Calu3 (cell line): ENCODE measurements at regions of chr3 and their contacts with region 1.

Region 1: DNA sequence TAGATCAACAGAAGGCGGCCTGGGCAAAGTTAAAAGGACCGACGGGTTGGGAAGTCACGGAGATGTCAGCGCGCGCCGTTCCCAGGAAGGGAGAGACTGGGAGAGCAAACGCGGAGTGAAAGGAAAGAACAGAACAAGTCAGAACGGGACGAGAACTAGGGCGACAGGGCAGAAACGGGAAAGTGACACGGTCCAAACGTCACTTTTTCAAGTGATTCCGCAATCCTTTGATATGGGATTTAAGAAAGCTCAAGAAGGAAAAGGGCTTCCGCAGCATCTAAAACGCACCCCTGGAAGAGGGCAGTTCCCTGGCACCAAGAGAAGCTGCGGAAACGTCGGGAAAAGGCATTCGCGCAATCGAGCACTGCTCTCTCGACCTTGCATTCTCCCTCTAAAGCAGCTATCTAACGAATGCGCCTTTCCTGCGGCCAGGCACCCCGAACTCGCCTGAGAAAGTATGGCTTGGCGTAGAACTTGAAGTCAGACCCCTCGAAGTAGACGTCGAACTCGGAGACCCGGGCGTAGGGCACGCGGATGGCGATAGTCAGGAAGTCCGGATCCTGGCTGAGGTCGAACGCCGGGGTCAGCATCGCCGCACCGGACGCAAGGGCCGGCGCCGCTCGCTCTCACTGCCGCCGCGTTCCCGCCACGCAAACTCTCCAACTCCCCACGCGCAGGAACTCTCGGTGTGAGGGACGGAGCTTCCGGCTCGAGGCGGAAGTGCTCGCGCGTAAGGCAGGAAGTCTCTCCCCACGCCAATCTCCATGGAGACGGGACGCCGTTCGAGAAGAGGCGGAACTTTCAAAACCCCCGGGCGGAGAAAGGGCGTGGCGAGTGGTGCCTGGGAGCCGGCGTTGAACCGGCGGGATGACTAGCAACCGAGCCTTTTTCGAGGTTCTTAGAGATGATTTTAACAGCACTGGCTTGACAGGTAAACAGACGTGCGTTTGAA is at the start of gene SHQ1:
- DNase-seq: peak; percentile 93
- H3K4me3 Mint-ChIP-seq: peak within 1 kb of the TSS; percentile 90
- H3K27ac Mint-ChIP-seq: peak within 1 kb of the TSS; percentile 75
- H3K4me1 Mint-ChIP-seq: peaks cover 24% of the 10 kb centered on the region
- H3K27me3 Mint-ChIP-seq: no peaks in the 10 kb centered on the region
- CTCF ChIP-seq: no peak
- total RNA-seq, gene SHQ1: 19.4 and 22.3 TPM in 2 replicates

Region 2: GRCh38 chr3:72996473-72997333 is 148.7 kb after region 1 on chr3 and contains the start of gene PPP4R2:
- CTCF ChIA-PET with region 1: interaction called, 3 read pairs
- intact Hi-C with region 1: loop called (anchors 5 kb)
- DNase-seq: peak; percentile 91
- H3K4me3 Mint-ChIP-seq: peak within 1 kb of the TSS; percentile 96
- H3K27ac Mint-ChIP-seq: peak within 1 kb of the TSS; percentile 89
- H3K4me1 Mint-ChIP-seq: peaks cover 10% of the 10 kb centered on the region
- H3K27me3 Mint-ChIP-seq: no peaks in the 10 kb centered on the region
- CTCF ChIP-seq: no peak
- total RNA-seq, gene PPP4R2: 68.4 and 89.0 TPM in 2 replicates

Region 3: DNA sequence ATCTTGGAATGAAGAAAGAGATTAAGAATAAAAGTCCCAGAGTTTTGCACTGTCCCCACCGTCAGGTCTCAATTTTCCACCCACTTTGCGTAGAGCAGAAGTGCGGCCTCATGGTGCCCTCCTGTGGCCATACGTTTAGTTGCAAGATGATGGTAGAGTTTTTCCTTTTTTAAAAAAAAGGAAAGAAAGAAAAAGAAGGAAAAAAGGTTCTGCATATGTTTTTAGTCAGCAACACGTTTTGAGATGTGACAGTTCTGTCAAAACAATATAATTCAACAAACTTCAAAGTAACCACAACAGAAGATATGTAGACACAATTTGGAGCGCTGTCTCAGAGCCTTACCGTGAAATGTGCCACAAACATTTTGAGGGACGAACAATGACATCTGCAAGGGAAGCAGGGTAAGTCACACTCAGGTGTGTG is 238.1 kb after region 1 on chr3:
- CTCF ChIA-PET with region 1: interaction called, 12 read pairs
- intact Hi-C with region 1: loop called (anchors 1 kb)
- DNase-seq: peak; percentile 54
- H3K4me3 Mint-ChIP-seq: no peak overlapping the region
- H3K27ac Mint-ChIP-seq: no peak overlapping the region
- H3K4me1 Mint-ChIP-seq: no peaks in the 10 kb centered on the region
- H3K27me3 Mint-ChIP-seq: peaks cover 14% of the 10 kb centered on the region
- CTCF ChIP-seq: peak; percentile 36